Activated CD4-positive, alpha-beta memory T cell treated with anti-CD3 and anti-CD28 coated beads for 36 hours (primary cell): ENCODE measurements at regions of chr4 and their contacts with region 1.

Region 1: GRCh38 chr4:122458625-122459024 is 2.1 kb upstream of the IL2 start:
- DNase-seq: peak; percentile 75
- H3K4me3 Mint-ChIP-seq: peak overlapping the region; percentile 71
- H3K27ac Mint-ChIP-seq: peak overlapping the region; percentile 97
- H3K4me1 Mint-ChIP-seq: peaks cover 44% of the 10 kb centered on the region
- H3K27me3 Mint-ChIP-seq: no peaks in the 10 kb centered on the region

Region 2: DNA sequence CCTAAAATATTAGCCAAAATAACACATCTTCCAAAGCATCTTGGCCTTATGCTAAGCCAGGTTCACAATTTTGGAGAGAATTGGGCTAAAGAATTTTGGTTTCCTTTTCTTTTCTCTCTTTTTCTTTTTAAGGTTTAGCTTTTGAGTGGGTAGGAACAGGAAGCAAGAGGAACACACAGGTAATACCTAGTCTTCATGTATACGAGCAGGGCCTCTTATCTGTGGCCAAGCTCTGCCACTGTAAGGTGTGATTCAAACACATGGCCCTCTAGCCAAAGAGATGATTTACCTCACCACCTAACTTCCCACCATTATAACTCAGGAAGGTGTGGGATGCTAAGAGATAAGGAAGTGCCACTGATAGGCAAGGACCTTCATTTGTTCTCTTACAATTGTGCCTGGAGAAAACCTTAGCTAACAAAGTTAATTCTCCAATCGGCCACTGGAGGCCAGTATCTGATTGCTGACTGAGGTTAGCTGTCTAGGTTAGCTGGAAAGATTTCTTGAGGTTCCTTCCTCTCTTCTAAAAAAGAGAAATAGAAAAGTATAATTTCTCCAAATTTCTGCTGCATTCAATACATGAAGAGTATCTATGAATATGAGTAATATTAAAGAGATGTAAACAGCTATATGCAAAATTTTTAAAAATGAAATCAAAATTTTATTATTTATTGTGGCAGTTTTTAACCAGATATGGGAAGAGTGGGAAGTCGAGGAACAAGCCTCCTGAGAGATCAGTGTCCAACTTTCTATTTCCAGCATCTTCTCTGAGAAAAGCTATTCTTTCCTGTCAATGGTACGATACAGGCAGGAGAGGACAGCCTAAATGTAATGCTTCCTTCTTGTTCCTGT is 558.3 kb before region 1 on chr4:
- CTCF ChIA-PET with region 1: interaction called, 3 read pairs
- POLR2A ChIA-PET with region 1: no interaction called
- intact Hi-C with region 1: loop called (anchors 5 kb)
- DNase-seq: peak; percentile 58
- H3K4me3 Mint-ChIP-seq: no peak overlapping the region
- H3K27ac Mint-ChIP-seq: no peak overlapping the region
- H3K4me1 Mint-ChIP-seq: peaks cover 8% of the 10 kb centered on the region
- H3K27me3 Mint-ChIP-seq: peaks cover 6% of the 10 kb centered on the region

Region 3: GRCh38 chr4:122151982-122152710 is 306.5 kb before region 1 on chr4 and contains the start of gene BLTP1:
- CTCF ChIA-PET with region 1: no interaction called
- POLR2A ChIA-PET with region 1: interaction called, 3 read pairs
- intact Hi-C with region 1: loop called (anchors 2 kb)
- DNase-seq: peak; percentile 91
- H3K4me3 Mint-ChIP-seq: peak within 1 kb of the TSS; percentile 92
- H3K27ac Mint-ChIP-seq: peak within 1 kb of the TSS; percentile 93
- H3K4me1 Mint-ChIP-seq: peaks cover 51% of the 10 kb centered on the region
- H3K27me3 Mint-ChIP-seq: no peaks in the 10 kb centered on the region
- total RNA-seq, gene BLTP1: 26.6 to 30.7 TPM

Region 4: GRCh38 chr4:122476126-122476525 is 17.5 kb after region 1 on chr4:
- CTCF ChIA-PET with region 1: no interaction called
- POLR2A ChIA-PET with region 1: no interaction called
- intact Hi-C with region 1: loop called (anchors 2 kb)
- DNase-seq: no peak
- H3K4me3 Mint-ChIP-seq: no peak overlapping the region
- H3K27ac Mint-ChIP-seq: no peak overlapping the region
- H3K4me1 Mint-ChIP-seq: peaks cover 16% of the 10 kb centered on the region
- H3K27me3 Mint-ChIP-seq: no peaks in the 10 kb centered on the region

Region 5: GRCh38 chr4:122542411-122543236 is 84.0 kb after region 1 on chr4:
- CTCF ChIA-PET with region 1: interaction called, 6 read pairs
- POLR2A ChIA-PET with region 1: interaction called, 26 read pairs
- intact Hi-C with region 1: loop called (anchors 1 kb)
- DNase-seq: no peak
- H3K4me3 Mint-ChIP-seq: peak overlapping the region; percentile 62
- H3K27ac Mint-ChIP-seq: peak overlapping the region; percentile 97
- H3K4me1 Mint-ChIP-seq: peaks cover 93% of the 10 kb centered on the region
- H3K27me3 Mint-ChIP-seq: no peaks in the 10 kb centered on the region

Region 6: GRCh38 chr4:122666527-122667245 is 208.1 kb after region 1 on chr4:
- CTCF ChIA-PET with region 1: no interaction called
- POLR2A ChIA-PET with region 1: no interaction called
- intact Hi-C with region 1: loop called (anchors 2 kb)
- DNase-seq: no peak
- H3K4me3 Mint-ChIP-seq: peak overlapping the region; percentile 14
- H3K27ac Mint-ChIP-seq: peak overlapping the region; percentile 93
- H3K4me1 Mint-ChIP-seq: peaks cover 74% of the 10 kb centered on the region
- H3K27me3 Mint-ChIP-seq: no peaks in the 10 kb centered on the region

Region 7: DNA sequence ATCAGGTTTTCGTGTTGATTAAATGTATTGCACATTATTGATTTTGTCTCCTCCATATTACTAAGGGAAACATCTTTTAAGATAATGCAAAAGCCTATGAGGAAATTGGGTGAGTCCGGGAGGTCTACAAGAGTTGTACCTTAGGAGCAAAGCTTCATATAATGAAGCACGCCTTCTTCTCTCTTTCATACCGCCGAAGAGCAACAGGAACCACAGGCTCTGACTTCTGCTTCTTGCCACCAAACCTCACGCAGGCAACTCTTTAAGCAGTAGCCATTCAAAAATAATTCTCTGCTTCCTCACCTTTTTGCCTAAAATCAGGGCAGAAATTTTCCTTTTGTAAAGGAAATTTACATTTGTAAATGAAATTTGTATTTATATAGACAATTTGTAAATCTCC is 1077.6 kb after region 1 on chr4:
- CTCF ChIA-PET with region 1: no interaction called
- POLR2A ChIA-PET with region 1: no interaction called
- intact Hi-C with region 1: no loop called
- DNase-seq: no peak
- H3K4me3 Mint-ChIP-seq: no peak overlapping the region
- H3K27ac Mint-ChIP-seq: no peak overlapping the region
- H3K4me1 Mint-ChIP-seq: no peaks in the 10 kb centered on the region
- H3K27me3 Mint-ChIP-seq: no peaks in the 10 kb centered on the region